CD4-positive, alpha-beta memory T cell (primary cell): ENCODE measurements at regions of chr17 and their contacts with region 1.

Region 1: DNA sequence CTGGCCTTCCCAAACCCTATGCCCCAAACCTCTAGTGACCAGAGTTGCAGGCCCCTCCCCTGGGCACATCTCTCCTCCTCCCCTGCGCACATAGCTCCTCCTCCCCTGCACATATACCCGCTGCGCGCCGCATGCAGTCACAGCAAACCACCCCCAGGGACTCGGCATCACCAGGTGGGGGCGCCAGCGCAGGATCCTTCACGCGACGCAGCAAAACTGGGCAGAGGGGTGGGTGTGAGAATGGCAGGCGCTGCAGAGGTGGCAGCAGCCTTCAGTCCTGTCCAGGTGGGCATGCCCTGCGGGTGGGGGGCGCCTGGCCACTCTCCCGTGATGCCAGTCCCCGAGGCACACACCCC is 5.6 kb downstream of the CORO6 start:
- DNase-seq: peak; percentile 89 to 94 (median 91)
- H3K4me3 ChIP-seq: peak overlapping the region; percentile 64 to 89
- H3K4me3 Mint-ChIP-seq: peak overlapping the region; percentile 82 to 94 (median 92)
- H3K27ac ChIP-seq: peak overlapping the region; percentile 43
- H3K27ac Mint-ChIP-seq: peak overlapping the region; percentile 63 to 89 (median 81)
- H3K4me1 ChIP-seq: peaks cover 62% of the 10 kb centered on the region
- H3K4me1 Mint-ChIP-seq: peaks cover 20 to 51% (median 33%) of the 10 kb centered on the region in 4 donors
- H3K27me3 ChIP-seq: no peaks in the 10 kb centered on the region
- H3K27me3 Mint-ChIP-seq: no peaks in the 10 kb centered on the region

Region 2: GRCh38 chr17:29579866-29580771 is 37.0 kb before region 1 on chr17:
- CTCF ChIA-PET with region 1: interaction called, 523 read pairs
- POLR2A ChIA-PET with region 1: interaction called, 127 read pairs
- intact Hi-C with region 1: loop called (anchors 1 kb)
- DNase-seq: peak; percentile 85 to 91 (median 87)
- H3K4me3 ChIP-seq: no peak overlapping the region
- H3K4me3 Mint-ChIP-seq: peak overlapping the region in 2 of 8 donors; percentile 8 to 65
- H3K27ac ChIP-seq: no peak overlapping the region
- H3K27ac Mint-ChIP-seq: peak overlapping the region; percentile 55 to 90 (median 83)
- H3K4me1 ChIP-seq: peaks cover 18% of the 10 kb centered on the region
- H3K4me1 Mint-ChIP-seq: peaks cover 8 to 31% (median 18%) of the 10 kb centered on the region in 4 donors
- H3K27me3 ChIP-seq: no peaks in the 10 kb centered on the region
- H3K27me3 Mint-ChIP-seq: no peaks in the 10 kb centered on the region

Region 3: GRCh38 chr17:29630630-29631193 is 13.6 kb after region 1 on chr17:
- CTCF ChIA-PET with region 1: interaction called, 10 read pairs
- POLR2A ChIA-PET with region 1: interaction called, 6 read pairs
- intact Hi-C with region 1: no loop called
- DNase-seq: no peak
- H3K4me3 ChIP-seq: no peak overlapping the region
- H3K4me3 Mint-ChIP-seq: no peak overlapping the region
- H3K27ac ChIP-seq: no peak overlapping the region
- H3K27ac Mint-ChIP-seq: peak overlapping the region in 3 of 7 donors; percentile 21 to 76 (median 46)
- H3K4me1 ChIP-seq: no peaks in the 10 kb centered on the region
- H3K4me1 Mint-ChIP-seq: peaks cover 4 to 14% (median 10%) of the 10 kb centered on the region in 4 donors
- H3K27me3 ChIP-seq: no peaks in the 10 kb centered on the region
- H3K27me3 Mint-ChIP-seq: no peaks in the 10 kb centered on the region

Region 4: GRCh38 chr17:29705386-29705785 is 88.3 kb after region 1 on chr17:
- CTCF ChIA-PET with region 1: interaction called, 19 read pairs
- POLR2A ChIA-PET with region 1: interaction called, 35 read pairs
- intact Hi-C with region 1: loop called (anchors 2 kb)
- DNase-seq: peak in 4 of 5 donors; percentile 26 to 39 (median 28)
- H3K4me3 ChIP-seq: peak overlapping the region in 1 of 2 donors; percentile 16
- H3K4me3 Mint-ChIP-seq: peak overlapping the region; percentile 58 to 87 (median 76)
- H3K27ac ChIP-seq: peak overlapping the region; percentile 68
- H3K27ac Mint-ChIP-seq: peak overlapping the region; percentile 91 to 100 (median 98)
- H3K4me1 ChIP-seq: peaks cover 54% of the 10 kb centered on the region
- H3K4me1 Mint-ChIP-seq: peaks cover 30 to 61% (median 41%) of the 10 kb centered on the region in 4 donors
- H3K27me3 ChIP-seq: no peaks in the 10 kb centered on the region
- H3K27me3 Mint-ChIP-seq: no peaks in the 10 kb centered on the region

Region 5: GRCh38 chr17:29777663-29778062 is 160.6 kb after region 1 on chr17:
- CTCF ChIA-PET with region 1: interaction called, 81 read pairs
- POLR2A ChIA-PET with region 1: interaction called, 23 read pairs
- intact Hi-C with region 1: loop called (anchors 1 kb)
- DNase-seq: no peak
- H3K4me3 ChIP-seq: no peak overlapping the region
- H3K4me3 Mint-ChIP-seq: no peak overlapping the region
- H3K27ac ChIP-seq: no peak overlapping the region
- H3K27ac Mint-ChIP-seq: no peak overlapping the region
- H3K4me1 ChIP-seq: peaks cover 8% of the 10 kb centered on the region
- H3K4me1 Mint-ChIP-seq: peaks cover 5 to 9% (median 7%) of the 10 kb centered on the region in 4 donors
- H3K27me3 ChIP-seq: no peaks in the 10 kb centered on the region
- H3K27me3 Mint-ChIP-seq: no peaks in the 10 kb centered on the region